AG04449 (cell line): ENCODE measurements at regions of chr15 and their contacts with region 1.

Region 1: DNA sequence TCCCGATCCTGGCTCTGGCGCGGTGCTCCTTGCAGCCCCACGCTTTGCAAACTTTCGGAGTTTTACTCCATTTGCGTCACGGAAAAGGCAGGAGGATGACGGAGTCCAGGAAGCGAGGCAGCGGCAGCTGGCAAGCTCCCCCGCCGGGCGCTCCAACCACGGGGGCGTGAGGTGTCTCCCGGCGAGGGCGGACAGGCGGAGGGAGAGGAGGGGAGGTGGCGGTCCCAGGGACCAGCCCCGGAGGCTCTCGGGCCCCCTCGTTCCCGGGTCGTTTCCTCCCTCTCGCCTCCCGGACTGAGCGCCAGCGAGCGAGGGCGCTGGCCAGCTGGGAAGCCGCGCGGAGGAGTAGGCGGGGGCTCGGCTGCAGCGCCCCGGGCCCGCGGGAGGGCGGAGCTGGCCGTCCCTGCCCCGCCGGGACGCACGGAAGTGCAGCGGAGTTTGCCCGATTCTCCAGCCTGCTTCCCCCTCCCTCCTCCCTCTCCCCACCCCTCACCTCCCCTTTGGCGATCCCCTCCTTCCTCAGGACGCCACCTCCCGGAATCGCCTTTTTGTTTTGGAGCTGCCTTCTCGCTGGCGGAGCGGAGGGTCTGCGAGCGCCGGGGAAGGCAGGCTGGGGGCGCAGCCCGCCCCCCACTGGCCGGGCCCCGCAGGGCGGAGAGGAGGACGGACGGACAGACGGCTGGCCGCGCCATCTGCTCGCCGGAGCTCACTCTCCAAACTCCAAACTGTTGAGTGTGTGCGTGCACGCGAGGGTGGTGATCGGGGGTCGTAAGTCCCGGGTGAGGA is at the start of gene SNX33:
- DNase-seq: no peak
- H3K4me3 ChIP-seq: peak within 1 kb of the TSS; percentile 87
- CTCF ChIP-seq: peak; percentile 66

Region 2: GRCh38 chr15:75661091-75661777 is 13.7 kb after region 1 on chr15:
- CTCF ChIA-PET with region 1: interaction called, 14 read pairs
- POLR2A ChIA-PET with region 1: interaction called, 64 read pairs
- DNase-seq: peak; percentile 83
- H3K4me3 ChIP-seq: peak overlapping the region; percentile 23
- CTCF ChIP-seq: no peak

Region 3: DNA sequence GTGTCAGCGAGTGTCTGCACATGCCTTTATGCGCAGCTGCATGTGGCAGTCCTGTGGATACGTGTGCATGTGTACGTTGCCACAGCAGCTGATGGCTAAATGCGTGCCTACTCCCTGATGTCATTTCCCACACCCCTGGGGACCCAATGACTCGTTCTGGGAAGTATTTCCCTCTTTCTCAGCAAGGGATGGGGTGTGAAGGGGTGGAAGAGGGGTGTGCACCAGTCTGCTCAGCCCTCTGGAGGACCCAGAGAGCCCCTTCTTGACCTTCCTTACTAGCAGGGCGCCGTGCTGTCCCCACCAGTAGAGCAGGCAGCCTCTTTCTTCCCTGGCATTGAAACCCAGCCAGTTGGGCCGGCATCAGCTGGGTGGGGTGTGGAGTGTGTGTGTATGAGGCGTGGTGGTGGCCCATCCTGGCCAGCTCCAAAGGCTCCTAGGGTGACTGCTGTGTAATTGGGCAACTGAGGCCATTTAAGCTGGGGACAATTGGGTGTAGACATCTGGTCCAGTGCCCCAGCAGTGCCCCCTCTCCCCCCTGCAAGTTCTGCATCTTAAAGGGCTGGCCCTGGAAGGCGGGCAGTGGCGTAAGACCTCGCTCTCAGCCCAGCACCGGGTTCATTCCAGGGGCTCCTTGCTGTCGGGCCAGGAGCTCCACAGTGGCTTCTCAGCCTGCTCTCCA is 19.4 kb after region 1 on chr15:
- CTCF ChIA-PET with region 1: interaction called, 15 read pairs
- POLR2A ChIA-PET with region 1: interaction called, 64 read pairs
- DNase-seq: peak; percentile 99
- H3K4me3 ChIP-seq: no peak overlapping the region
- CTCF ChIP-seq: no peak